GM12878 (cell line): ENCODE measurements at regions of chr18 and their contacts with region 1.

Region 1: GRCh38 chr18:2104620-2105462 is 466.5 kb downstream of the METTL4 start:
- DNase-seq: no peak
- ATAC-seq: peak; percentile 97
- H3K4me3 ChIP-seq: no peak overlapping the region
- H3K27ac ChIP-seq: no peak overlapping the region
- H3K4me1 ChIP-seq: no peaks in the 10 kb centered on the region
- H3K27me3 ChIP-seq: no peaks in the 10 kb centered on the region
- CTCF ChIP-seq: peak; percentile 67 to 81 (median 70)
- EP300 ChIP-seq: no peak
- POLR2A ChIP-seq: no peak
- RAD21 ChIP-seq: peak; percentile 39

Region 2: GRCh38 chr18:2002151-2002550 is 102.7 kb before region 1 on chr18:
- CTCF ChIA-PET with region 1: no interaction called
- POLR2A ChIA-PET with region 1: no interaction called
- RAD21 ChIA-PET with region 1: no interaction called
- SMC1A ChIA-PET with region 1: no interaction called
- in situ Hi-C with region 1: no loop called
- intact Hi-C with region 1: no loop called
- DNase-seq: no peak
- ATAC-seq: no peak
- H3K4me3 ChIP-seq: no peak overlapping the region
- H3K27ac ChIP-seq: no peak overlapping the region
- H3K4me1 ChIP-seq: no peaks in the 10 kb centered on the region
- H3K27me3 ChIP-seq: no peaks in the 10 kb centered on the region
- CTCF ChIP-seq: no peak
- EP300 ChIP-seq: no peak
- POLR2A ChIP-seq: no peak
- RAD21 ChIP-seq: no peak

Region 3: DNA sequence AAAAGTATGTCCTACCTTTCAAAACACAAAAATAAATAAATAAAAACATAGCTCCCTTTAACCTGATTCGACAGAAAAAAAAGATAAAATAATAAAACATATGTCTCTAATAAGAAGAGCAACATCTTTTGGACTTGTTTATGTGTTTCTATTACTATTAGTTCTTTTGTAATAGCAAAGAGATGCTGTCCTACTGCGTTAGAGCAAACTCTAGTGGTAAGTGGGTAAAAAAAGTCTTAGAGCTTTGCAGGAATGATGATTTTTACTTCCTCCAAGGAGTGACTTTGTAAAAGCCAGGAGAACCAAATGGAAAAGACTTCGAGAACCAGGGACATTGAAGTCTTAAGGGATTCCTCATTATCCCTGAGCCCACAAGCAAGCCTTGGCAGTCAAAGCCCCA is 16.4 kb after region 1 on chr18:
- CTCF ChIA-PET with region 1: interaction called, 30 read pairs
- POLR2A ChIA-PET with region 1: no interaction called
- RAD21 ChIA-PET with region 1: interaction called, 4 read pairs
- SMC1A ChIA-PET with region 1: interaction called, 11 read pairs
- in situ Hi-C with region 1: no loop called
- intact Hi-C with region 1: no loop called
- DNase-seq: no peak
- ATAC-seq: no peak
- H3K4me3 ChIP-seq: no peak overlapping the region
- H3K27ac ChIP-seq: no peak overlapping the region
- H3K4me1 ChIP-seq: no peaks in the 10 kb centered on the region
- H3K27me3 ChIP-seq: no peaks in the 10 kb centered on the region
- CTCF ChIP-seq: no peak
- EP300 ChIP-seq: no peak
- POLR2A ChIP-seq: no peak
- RAD21 ChIP-seq: no peak

Region 4: GRCh38 chr18:2197945-2198344 is 93.1 kb after region 1 on chr18:
- CTCF ChIA-PET with region 1: no interaction called
- POLR2A ChIA-PET with region 1: no interaction called
- RAD21 ChIA-PET with region 1: no interaction called
- SMC1A ChIA-PET with region 1: no interaction called
- in situ Hi-C with region 1: no loop called
- intact Hi-C with region 1: no loop called
- DNase-seq: no peak
- ATAC-seq: no peak
- H3K4me3 ChIP-seq: no peak overlapping the region
- H3K27ac ChIP-seq: no peak overlapping the region
- H3K4me1 ChIP-seq: no peaks in the 10 kb centered on the region
- H3K27me3 ChIP-seq: no peaks in the 10 kb centered on the region
- CTCF ChIP-seq: no peak
- EP300 ChIP-seq: no peak
- POLR2A ChIP-seq: no peak
- RAD21 ChIP-seq: no peak

Region 5: DNA sequence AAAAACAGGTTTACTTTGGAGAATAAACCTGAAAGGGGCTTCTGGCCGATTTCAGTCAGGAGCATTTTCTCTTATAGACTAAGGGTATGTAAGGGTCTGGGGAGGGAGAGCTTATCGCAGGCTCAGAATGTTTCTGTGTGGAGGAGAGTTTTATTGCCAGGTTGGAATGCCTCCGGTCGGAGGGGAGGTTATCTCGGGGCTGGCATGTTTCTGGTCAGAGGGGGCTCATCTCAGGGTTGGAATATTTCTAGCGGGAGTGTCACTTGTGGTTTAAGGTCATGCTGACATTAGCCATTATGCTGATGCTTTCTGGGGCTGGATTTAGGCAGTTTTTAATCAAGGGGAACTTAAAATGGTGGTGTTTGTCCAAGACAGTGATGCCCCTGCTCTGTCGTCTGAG is 132.9 kb after region 1 on chr18:
- CTCF ChIA-PET with region 1: no interaction called
- POLR2A ChIA-PET with region 1: no interaction called
- RAD21 ChIA-PET with region 1: no interaction called
- SMC1A ChIA-PET with region 1: no interaction called
- in situ Hi-C with region 1: no loop called
- intact Hi-C with region 1: loop called (anchors 5 kb)
- DNase-seq: no peak
- ATAC-seq: no peak
- H3K4me3 ChIP-seq: no peak overlapping the region
- H3K27ac ChIP-seq: no peak overlapping the region
- H3K4me1 ChIP-seq: no peaks in the 10 kb centered on the region
- H3K27me3 ChIP-seq: no peaks in the 10 kb centered on the region; a peak in 1 of 4 replicates
- CTCF ChIP-seq: no peak
- EP300 ChIP-seq: no peak
- POLR2A ChIP-seq: no peak
- RAD21 ChIP-seq: no peak

Region 6: DNA sequence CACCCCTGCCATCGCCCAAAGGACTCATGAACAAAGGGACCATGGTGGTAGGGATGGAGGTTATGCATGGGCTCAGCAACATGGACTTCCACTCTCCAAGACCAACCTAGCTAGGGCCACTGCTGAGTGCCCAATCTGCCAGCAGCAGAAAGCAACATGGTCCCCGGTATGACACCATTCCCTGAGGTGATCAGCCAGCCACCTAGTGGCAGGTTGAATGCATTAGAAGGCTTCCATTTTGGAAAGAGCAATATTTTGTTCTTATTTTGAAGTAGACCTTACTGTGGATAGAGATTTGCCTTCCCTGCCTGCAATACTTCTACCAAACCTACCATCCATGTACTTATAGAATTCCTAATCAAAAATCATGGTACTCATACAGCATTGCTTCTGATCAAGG is 366.7 kb after region 1 on chr18:
- CTCF ChIA-PET with region 1: interaction called, 10 read pairs
- POLR2A ChIA-PET with region 1: no interaction called
- RAD21 ChIA-PET with region 1: no interaction called
- SMC1A ChIA-PET with region 1: no interaction called
- in situ Hi-C with region 1: no loop called
- intact Hi-C with region 1: no loop called
- DNase-seq: no peak
- ATAC-seq: peak; percentile 71
- H3K4me3 ChIP-seq: no peak overlapping the region
- H3K27ac ChIP-seq: no peak overlapping the region
- H3K4me1 ChIP-seq: no peaks in the 10 kb centered on the region
- H3K27me3 ChIP-seq: no peaks in the 10 kb centered on the region
- CTCF ChIP-seq: peak in 2 of 3 experiments; percentile 32 to 48; a peak in 3 of 6 replicates
- EP300 ChIP-seq: no peak
- POLR2A ChIP-seq: no peak
- RAD21 ChIP-seq: no peak